HCT116 (cell line): ENCODE measurements at regions of chr10 and their contacts with region 1.

Region 1: GRCh38 chr10:113704637-113705343 is 25.1 kb downstream of the CASP7 start:
- DNase-seq: peak; percentile 38
- ATAC-seq: peak; percentile 82
- H3K4me3 ChIP-seq: no peak overlapping the region
- H3K27ac ChIP-seq: no peak overlapping the region
- H3K4me1 ChIP-seq: no peaks in the 10 kb centered on the region
- H3K27me3 ChIP-seq: no peaks in the 10 kb centered on the region
- CTCF ChIP-seq: peak; percentile 72 to 87 (median 80)
- POLR2A ChIP-seq: no peak
- RAD21 ChIP-seq: peak; percentile 84

Region 2: DNA sequence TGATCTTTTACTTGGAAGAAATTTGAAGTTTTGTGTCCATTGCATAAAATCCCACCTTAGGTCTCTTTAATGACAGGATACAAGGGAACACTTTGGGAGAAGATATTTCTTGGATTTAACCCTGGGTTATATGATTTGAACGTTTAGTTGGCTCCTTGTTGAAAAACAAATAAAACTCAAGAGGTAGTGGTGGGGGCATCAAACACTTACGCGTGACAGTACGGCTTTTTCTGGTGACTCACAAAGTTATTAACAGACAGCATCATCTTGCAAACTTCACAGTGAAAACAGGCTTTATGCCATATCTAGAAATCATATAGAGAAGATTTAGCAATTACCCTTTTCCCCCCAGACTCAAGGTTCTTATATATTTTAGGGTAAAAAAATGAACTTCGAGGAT is 41.6 kb before region 1 on chr10:
- CTCF ChIA-PET with region 1: no interaction called
- POLR2A ChIA-PET with region 1: no interaction called
- RAD21 ChIA-PET with region 1: no interaction called
- intact Hi-C with region 1: no loop called
- DNase-seq: no peak
- ATAC-seq: no peak
- H3K4me3 ChIP-seq: no peak overlapping the region
- H3K27ac ChIP-seq: no peak overlapping the region
- H3K4me1 ChIP-seq: peaks cover 0 to 8% of the 10 kb centered on the region in 2 experiments; a peak in 2 of 4 replicates
- H3K27me3 ChIP-seq: no peaks in the 10 kb centered on the region
- CTCF ChIP-seq: no peak
- POLR2A ChIP-seq: no peak
- RAD21 ChIP-seq: no peak

Region 3: DNA sequence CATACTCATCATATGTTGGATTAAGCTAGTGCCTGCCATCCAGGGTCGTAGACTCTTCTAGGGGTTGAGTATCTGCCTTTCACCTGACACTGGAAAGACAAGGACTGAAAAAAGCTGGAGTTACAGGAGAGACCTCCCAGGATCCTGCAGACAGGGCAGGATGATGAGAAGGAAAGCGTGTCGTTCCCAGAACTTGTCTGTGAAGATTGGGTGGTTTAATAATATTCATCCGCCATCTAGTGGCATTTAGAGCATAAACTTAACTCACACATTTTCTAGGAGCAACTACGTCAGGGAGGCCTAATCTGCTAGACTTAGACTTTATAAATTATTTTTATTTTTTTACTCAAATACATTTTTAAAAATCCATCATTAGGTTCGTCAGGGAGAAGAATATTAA is 398.5 kb after region 1 on chr10:
- CTCF ChIA-PET with region 1: interaction called, 6 read pairs
- POLR2A ChIA-PET with region 1: no interaction called
- RAD21 ChIA-PET with region 1: interaction called in 1 of 2 experiments, 6 read pairs
- intact Hi-C with region 1: loop called (anchors 1 kb)
- DNase-seq: peak; percentile 58
- ATAC-seq: peak; percentile 93
- H3K4me3 ChIP-seq: no peak overlapping the region
- H3K27ac ChIP-seq: no peak overlapping the region
- H3K4me1 ChIP-seq: 0 out of 4 replicates have a peak, but pooled peaks cover 0 to 4% of the 10 kb centered on the region in 2 experiments
- H3K27me3 ChIP-seq: no peaks in the 10 kb centered on the region
- CTCF ChIP-seq: peak; percentile 56 to 91 (median 63)
- POLR2A ChIP-seq: no peak
- RAD21 ChIP-seq: peak; percentile 98

Region 4: DNA sequence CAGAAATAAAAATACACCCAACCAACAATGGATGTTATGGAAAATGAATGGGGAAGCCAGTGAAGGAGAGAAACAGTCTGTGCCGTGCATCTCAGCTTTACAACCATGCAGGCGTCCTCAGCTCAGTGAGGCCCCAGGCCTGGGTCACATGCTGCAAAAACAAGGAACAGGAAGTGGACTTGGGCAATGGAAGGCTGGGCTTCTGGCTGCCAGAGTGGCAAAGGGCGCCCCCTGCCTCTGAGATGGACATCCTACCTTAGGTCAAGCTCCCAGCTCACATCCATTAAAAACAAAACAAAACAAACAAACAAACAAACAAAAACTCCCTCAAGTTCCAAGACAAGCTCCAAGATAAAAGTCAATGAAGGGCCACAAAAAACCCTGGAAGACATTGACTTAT is 754.2 kb after region 1 on chr10:
- CTCF ChIA-PET with region 1: no interaction called
- POLR2A ChIA-PET with region 1: no interaction called
- RAD21 ChIA-PET with region 1: no interaction called
- intact Hi-C with region 1: loop called (anchors 10 kb)
- DNase-seq: peak; percentile 33
- ATAC-seq: peak; percentile 98
- H3K4me3 ChIP-seq: no peak overlapping the region
- H3K27ac ChIP-seq: no peak overlapping the region
- H3K4me1 ChIP-seq: 0 out of 4 replicates have a peak, but pooled peaks cover 0 to 5% of the 10 kb centered on the region in 2 experiments
- H3K27me3 ChIP-seq: no peaks in the 10 kb centered on the region
- CTCF ChIP-seq: peak; percentile 74 to 89 (median 83)
- POLR2A ChIP-seq: no peak
- RAD21 ChIP-seq: peak; percentile 87